WTC11 (cell line): ENCODE measurements at regions of chr11 and their contacts with region 1.

Region 1: GRCh38 chr11:17389211-17389956 is 925 bp upstream of the KCNJ11 start:
- DNase-seq: peak; percentile 84
- ATAC-seq: peak; percentile 69
- H3K4me3 Mint-ChIP-seq: peak overlapping the region; percentile 67
- H3K27ac Mint-ChIP-seq: no peak overlapping the region
- H3K4me1 Mint-ChIP-seq: peaks cover 6% of the 10 kb centered on the region
- H3K27me3 Mint-ChIP-seq: peaks cover 20% of the 10 kb centered on the region
- CTCF ChIP-seq: peak; percentile 77

Region 2: GRCh38 chr11:17354601-17354991 is 34.8 kb before region 1 on chr11:
- CTCF ChIA-PET with region 1: interaction called, 11 read pairs
- POLR2A ChIA-PET with region 1: no interaction called
- DNase-seq: peak; percentile 67
- ATAC-seq: 0 out of 2 replicates have a peak, but pooled peaks have one; percentile 11
- H3K4me3 Mint-ChIP-seq: peak overlapping the region; percentile 82
- H3K27ac Mint-ChIP-seq: no peak overlapping the region
- H3K4me1 Mint-ChIP-seq: peaks cover 27% of the 10 kb centered on the region
- H3K27me3 Mint-ChIP-seq: peaks cover 60% of the 10 kb centered on the region
- CTCF ChIP-seq: peak; percentile 47

Region 3: DNA sequence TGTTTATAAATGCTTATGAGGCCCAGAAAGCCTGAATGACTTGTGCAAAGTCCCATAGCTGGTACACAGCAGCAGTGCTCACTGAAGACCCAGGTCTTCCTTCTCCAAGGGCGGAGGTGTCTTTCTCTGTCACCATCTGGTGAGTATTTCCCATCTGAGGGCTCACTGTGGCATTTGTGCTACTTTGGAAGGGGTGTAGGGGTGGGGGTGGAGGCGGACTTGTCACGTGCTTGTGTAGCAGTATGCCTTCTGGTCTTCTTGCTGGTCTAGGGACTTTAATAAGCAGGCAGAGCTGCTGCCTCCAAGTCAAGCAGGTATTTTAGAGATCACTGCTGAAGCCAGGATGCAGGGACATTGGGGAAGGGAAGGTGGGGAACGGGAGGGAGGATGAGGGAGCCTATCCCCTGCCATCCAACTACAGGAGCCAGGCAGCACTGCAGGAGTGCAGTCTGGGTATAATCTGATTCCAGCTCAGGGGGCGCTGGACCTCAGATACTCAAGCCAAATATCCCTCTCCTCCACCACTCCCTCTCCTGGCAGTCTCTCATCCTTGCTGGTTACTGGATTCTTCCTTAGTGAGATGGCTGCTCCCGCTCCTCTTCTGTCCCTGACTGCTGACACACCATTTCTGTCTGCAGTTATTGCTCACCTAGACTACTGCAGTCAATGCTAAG is 83.8 kb after region 1 on chr11:
- CTCF ChIA-PET with region 1: interaction called, 56 read pairs
- POLR2A ChIA-PET with region 1: interaction called, 4 read pairs
- DNase-seq: peak; percentile 76
- ATAC-seq: peak; percentile 91
- H3K4me3 Mint-ChIP-seq: peak overlapping the region; percentile 11; the same call in 1 of the 2 replicates
- H3K27ac Mint-ChIP-seq: no peak overlapping the region
- H3K4me1 Mint-ChIP-seq: peaks cover 14% of the 10 kb centered on the region
- H3K27me3 Mint-ChIP-seq: peaks cover 47% of the 10 kb centered on the region
- CTCF ChIP-seq: peak; percentile 25; the same call in 1 of the 2 replicates

Region 4: DNA sequence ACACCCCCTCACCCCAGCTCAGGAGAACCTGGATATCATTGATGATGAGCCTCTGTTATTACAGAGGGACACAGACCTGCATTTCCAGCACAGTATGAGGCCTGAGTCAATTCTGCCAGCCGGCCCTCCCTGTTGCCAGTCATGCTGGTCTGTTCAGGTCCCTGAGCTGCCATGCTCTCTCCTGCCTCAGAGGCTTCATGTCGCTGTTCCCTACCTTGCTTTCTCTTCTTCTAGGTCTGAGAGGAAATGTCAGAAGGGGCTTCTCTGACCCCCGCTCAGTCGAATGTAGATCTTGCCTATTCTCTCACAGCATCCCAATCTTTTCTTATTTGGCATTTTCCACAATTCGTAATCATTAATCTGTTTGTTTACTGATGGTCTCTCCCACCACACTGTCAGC is 109.1 kb after region 1 on chr11:
- CTCF ChIA-PET with region 1: interaction called, 47 read pairs
- POLR2A ChIA-PET with region 1: no interaction called
- DNase-seq: peak; percentile 47
- ATAC-seq: peak; percentile 89
- H3K4me3 Mint-ChIP-seq: no peak overlapping the region
- H3K27ac Mint-ChIP-seq: no peak overlapping the region
- H3K4me1 Mint-ChIP-seq: 0 out of 2 replicates have a peak, but pooled peaks cover 2% of the 10 kb centered on the region
- H3K27me3 Mint-ChIP-seq: peaks cover 2% of the 10 kb centered on the region; the same call in 1 of the 2 replicates
- CTCF ChIP-seq: no peak

Region 5: DNA sequence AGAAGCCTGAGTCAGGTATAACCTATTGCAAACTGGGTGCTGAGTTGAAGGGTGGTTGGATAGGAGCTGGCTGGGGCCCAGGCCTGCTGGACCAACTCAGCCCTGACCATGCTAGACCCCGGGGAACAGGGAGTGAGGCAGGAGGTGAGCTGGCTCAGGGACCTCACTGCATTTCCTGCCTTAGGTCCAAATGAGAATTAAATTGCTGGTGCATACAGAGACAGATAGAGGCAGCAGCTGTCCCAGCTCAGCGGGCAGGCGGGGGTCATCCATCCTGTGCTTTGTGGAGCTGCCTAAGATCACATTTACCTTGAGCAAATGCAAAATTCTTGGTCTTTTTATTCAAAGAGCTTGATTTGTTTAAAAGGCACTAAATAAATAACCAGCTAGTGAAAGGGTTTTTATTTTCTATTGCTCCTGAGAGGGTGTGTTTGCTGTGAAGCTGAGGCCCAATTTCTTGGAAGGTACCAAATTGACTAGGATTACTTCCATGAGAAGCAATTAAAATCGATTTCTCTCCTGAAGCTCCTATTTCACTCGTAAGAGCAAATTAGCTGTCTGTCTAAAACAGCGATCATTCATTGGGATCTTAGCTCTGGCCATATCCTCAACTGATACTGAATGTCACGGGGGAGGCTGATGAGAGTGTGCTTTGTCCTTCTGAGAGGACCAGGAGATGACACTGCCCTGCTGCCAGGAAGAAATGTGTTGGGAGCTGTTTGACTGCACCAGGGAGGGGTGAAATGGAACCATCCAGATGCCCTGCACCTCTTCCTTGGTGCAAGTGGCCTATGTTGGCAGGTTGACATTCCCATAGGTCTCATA is 129.9 kb after region 1 on chr11:
- CTCF ChIA-PET with region 1: interaction called, 203 read pairs
- POLR2A ChIA-PET with region 1: interaction called, 3 read pairs
- DNase-seq: no peak
- ATAC-seq: peak; percentile 89
- H3K4me3 Mint-ChIP-seq: no peak overlapping the region
- H3K27ac Mint-ChIP-seq: peak overlapping the region; percentile 30; the same call in 1 of the 2 replicates
- H3K4me1 Mint-ChIP-seq: peaks cover 30% of the 10 kb centered on the region
- H3K27me3 Mint-ChIP-seq: no peaks in the 10 kb centered on the region; the same call in 1 of the 2 replicates
- CTCF ChIP-seq: no peak